ENCODE measurements at regions of chr3 and their contacts with region 1.

Region 1: GRCh38 chr3:53677413-53677812 is 168.8 kb downstream of the CHDH start:
- DNase-seq: peak in 3 of 4 experiments; percentile 1 to 7 (median 7)
- ATAC-seq: peak; percentile 65; the same call in 2 of the 3 replicates
- H3K4me3 ChIP-seq: no peak overlapping the region
- H3K27ac ChIP-seq: no peak overlapping the region
- H3K4me1 ChIP-seq: no peaks in the 10 kb centered on the region
- H3K27me3 ChIP-seq: peaks cover 0 to 9% of the 10 kb centered on the region in 2 experiments; a peak in 3 of 5 replicates
- CTCF ChIP-seq: peak in 2 of 3 experiments; percentile 41 to 47; a peak in 4 of 6 replicates
- EP300 ChIP-seq: no peak
- POLR2A ChIP-seq: no peak
- RAD21 ChIP-seq: no peak

Region 2: GRCh38 chr3:53921296-53921695 is 243.9 kb after region 1 on chr3:
- CTCF ChIA-PET with region 1: no interaction called
- POLR2A ChIA-PET with region 1: no interaction called
- in situ Hi-C with region 1: no loop called
- intact Hi-C with region 1: loop called (anchors 10 kb)
- DNase-seq: no peak
- ATAC-seq: no peak; the same call in 2 of the 3 replicates
- H3K4me3 ChIP-seq: no peak overlapping the region
- H3K27ac ChIP-seq: no peak overlapping the region
- H3K4me1 ChIP-seq: no peaks in the 10 kb centered on the region
- H3K27me3 ChIP-seq: no peaks in the 10 kb centered on the region
- CTCF ChIP-seq: peak in 1 of 3 experiments; percentile 41; a peak in 2 of 6 replicates
- EP300 ChIP-seq: no peak
- POLR2A ChIP-seq: no peak
- RAD21 ChIP-seq: peak in 1 of 2 experiments; percentile 36; a peak in 1 of 4 replicates

Region 3: DNA sequence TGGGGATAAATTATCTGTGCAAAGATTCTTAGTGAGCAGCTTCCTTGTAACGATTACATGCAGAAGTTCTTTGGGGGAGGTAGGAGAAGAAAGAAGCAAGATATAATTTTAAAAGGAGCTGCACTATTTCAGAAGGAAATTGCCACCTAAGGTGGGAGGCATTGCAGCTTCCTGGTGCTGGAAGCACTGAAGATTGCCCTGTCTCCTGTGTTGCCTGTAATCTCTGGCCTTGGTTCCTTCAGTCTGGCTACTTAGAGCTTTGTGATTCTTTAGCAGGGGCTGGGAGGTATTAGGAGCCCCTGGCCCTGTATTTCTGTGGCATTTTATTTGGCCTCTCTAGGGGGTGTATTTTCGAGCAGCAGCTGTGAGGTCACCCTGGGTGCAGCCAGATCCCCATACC is 480.4 kb after region 1 on chr3:
- CTCF ChIA-PET with region 1: no interaction called
- POLR2A ChIA-PET with region 1: no interaction called
- in situ Hi-C with region 1: no loop called
- intact Hi-C with region 1: no loop called
- DNase-seq: no peak
- ATAC-seq: no peak
- H3K4me3 ChIP-seq: no peak overlapping the region
- H3K27ac ChIP-seq: no peak overlapping the region
- H3K4me1 ChIP-seq: no peaks in the 10 kb centered on the region
- H3K27me3 ChIP-seq: no peaks in the 10 kb centered on the region
- CTCF ChIP-seq: no peak
- EP300 ChIP-seq: no peak
- POLR2A ChIP-seq: no peak
- RAD21 ChIP-seq: no peak

Measured in K562 (cell line).